ENCODE measurements at regions of chr10 and their contacts with region 1.

Region 1: DNA sequence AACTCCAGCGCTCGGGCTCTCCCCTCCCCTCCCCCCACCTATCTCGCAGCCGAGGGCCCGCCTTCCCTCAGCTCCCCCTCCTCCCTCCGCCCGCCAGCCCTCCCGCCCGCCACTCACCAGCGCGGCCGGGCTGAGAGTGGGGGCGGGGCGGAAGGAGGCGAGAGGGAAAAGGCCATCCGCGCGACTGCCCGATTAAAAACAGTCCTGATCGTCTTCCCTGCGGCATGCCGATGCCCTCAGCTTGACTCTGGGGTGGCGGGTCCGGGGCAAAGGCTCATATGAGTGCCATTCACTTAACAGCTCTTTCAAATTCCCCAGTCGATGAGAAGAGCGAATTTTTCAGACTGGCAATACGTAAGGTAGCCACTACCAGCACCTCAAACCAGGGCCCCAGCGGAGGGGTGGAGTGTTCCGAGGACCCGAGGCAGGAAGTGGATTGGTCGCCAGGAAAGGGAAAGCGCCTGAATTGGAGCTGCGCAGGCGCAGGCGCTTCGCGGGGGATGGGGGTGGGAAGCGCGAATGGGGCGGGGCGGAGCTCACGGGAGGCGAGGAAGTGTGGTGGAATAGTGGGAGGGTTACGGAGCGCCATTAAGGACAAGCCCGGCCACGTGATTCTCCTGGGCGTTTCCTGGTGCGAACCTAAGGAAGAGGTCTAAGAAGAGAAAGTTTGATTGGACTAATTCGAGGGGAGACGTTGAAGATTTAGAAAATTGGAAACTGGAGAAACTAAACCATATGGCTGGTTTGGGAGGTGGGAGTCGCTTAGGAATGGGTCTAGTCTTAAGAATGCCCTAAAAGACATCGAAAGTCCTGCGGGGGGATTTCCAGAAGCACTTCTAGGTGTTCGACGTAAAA is at the start of gene UPF2:
- DNase-seq: peak; percentile 98
- H3K4me3 ChIP-seq: peak within 1 kb of the TSS; percentile 90 to 96 (median 92)
- H3K27ac ChIP-seq: peak within 1 kb of the TSS; percentile 98
- H3K4me1 ChIP-seq: peaks cover 16% of the 10 kb centered on the region
- H3K27me3 ChIP-seq: no peaks in the 10 kb centered on the region
- CTCF ChIP-seq: no peak
- total RNA-seq, gene UPF2: 12.0 to 23.7 TPM

Region 2: GRCh38 chr10:12027539-12027938 is 15.5 kb before region 1 on chr10:
- CTCF ChIA-PET with region 1: no interaction called
- dilution Hi-C with region 1: no loop called
- in situ Hi-C with region 1: no loop called
- intact Hi-C with region 1: no loop called
- DNase-seq: no peak
- H3K4me3 ChIP-seq: no peak overlapping the region
- H3K27ac ChIP-seq: no peak overlapping the region
- H3K4me1 ChIP-seq: no peaks in the 10 kb centered on the region
- H3K27me3 ChIP-seq: no peaks in the 10 kb centered on the region
- CTCF ChIP-seq: no peak

Region 3: DNA sequence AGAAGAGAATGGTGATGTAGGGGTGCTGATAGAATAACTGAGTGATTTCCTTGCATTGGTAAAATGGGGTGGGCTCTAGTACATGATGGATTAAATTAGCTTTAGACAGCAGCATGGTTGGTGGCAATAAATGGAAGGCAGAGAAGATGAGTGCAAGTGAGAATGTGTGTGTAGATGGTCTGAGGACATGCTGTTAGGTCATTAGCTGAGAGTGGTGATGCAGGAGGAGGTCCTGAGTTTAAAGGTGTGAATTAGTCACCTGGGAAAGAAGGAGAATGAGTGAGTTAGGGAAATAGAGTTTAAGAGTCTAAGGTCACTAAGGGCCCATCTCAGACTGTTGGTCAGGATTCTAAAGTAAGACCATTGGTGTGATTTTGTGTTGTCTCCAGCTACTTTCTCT is 68.5 kb after region 1 on chr10:
- CTCF ChIA-PET with region 1: no interaction called
- dilution Hi-C with region 1: no loop called
- in situ Hi-C with region 1: no loop called
- intact Hi-C with region 1: no loop called
- DNase-seq: no peak
- H3K4me3 ChIP-seq: no peak overlapping the region
- H3K27ac ChIP-seq: no peak overlapping the region
- H3K4me1 ChIP-seq: no peaks in the 10 kb centered on the region
- H3K27me3 ChIP-seq: no peaks in the 10 kb centered on the region
- CTCF ChIP-seq: no peak

Region 4: GRCh38 chr10:12129222-12130111 is 86.4 kb after region 1 on chr10 and contains the start of gene SEC61A2:
- CTCF ChIA-PET with region 1: interaction called, 3 read pairs
- dilution Hi-C with region 1: no loop called
- in situ Hi-C with region 1: no loop called
- intact Hi-C with region 1: loop called (anchors 1 kb)
- DNase-seq: peak; percentile 87
- H3K4me3 ChIP-seq: peak within 1 kb of the TSS; percentile 88 to 94 (median 91)
- H3K27ac ChIP-seq: peak within 1 kb of the TSS; percentile 73
- H3K4me1 ChIP-seq: no peaks in the 10 kb centered on the region
- H3K27me3 ChIP-seq: no peaks in the 10 kb centered on the region
- CTCF ChIP-seq: no peak
- total RNA-seq, gene SEC61A2: 10.7 to 15.6 TPM

Measured in mammary epithelial cell (primary cell).